HCT116 (cell line): ENCODE measurements at regions of chr3 and their contacts with region 1.

Region 1: DNA sequence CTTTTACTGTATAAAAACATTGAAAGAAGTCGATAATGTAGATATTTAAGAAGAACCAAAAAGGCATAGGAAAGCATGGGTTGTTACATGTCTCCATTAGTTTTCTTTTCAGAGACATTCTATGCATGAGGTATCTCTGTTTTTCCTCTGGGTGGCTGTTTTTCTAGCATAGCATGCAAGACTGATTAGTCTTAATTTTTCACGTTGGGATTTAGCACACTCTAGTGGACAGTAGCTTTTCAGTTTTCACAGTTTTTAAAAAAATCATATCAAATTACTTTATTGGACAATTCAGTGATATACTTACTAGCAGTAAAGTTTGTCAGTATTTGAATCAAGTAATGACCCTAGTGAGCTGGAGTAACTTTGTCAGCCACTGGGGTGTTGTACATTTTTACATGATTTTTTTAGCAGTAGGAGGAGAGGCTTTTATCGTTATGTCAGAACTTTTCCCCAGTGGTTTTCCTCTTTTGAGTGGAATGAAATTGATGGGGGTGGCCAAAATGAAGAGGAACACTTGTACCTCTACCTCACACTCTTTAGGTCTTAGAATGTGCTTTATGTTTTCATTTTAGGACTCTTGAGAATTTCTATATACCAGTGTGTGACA is 57.2 kb downstream of the SEC22A start:
- DNase-seq: peak; percentile 50
- ATAC-seq: peak; percentile 94
- H3K4me3 ChIP-seq: no peak overlapping the region
- H3K27ac ChIP-seq: no peak overlapping the region
- H3K4me1 ChIP-seq: no peaks in the 10 kb centered on the region
- H3K27me3 ChIP-seq: no peaks in the 10 kb centered on the region
- CTCF ChIP-seq: peak; percentile 59 to 96 (median 75)
- POLR2A ChIP-seq: no peak
- RAD21 ChIP-seq: peak; percentile 85

Region 2: DNA sequence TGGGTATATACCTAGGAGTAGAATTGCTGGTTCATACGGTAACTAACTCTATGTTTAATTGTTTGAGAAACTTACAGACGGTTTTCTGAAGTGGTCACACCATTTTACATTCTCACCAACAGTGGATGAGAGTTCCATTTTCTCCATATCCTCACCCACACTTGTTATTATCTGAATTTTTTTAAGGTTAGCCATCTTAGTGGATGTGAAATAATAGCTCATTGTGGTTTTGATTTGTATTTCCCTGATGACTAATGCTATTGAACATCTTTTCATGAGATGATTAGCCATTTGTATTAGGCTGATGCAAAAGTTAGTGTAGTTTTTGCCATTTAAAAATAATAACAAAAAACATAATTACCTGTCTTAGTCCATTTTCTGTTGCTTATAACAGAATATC is 915.3 kb before region 1 on chr3:
- CTCF ChIA-PET with region 1: no interaction called
- POLR2A ChIA-PET with region 1: no interaction called
- RAD21 ChIA-PET with region 1: no interaction called
- intact Hi-C with region 1: no loop called
- DNase-seq: no peak
- ATAC-seq: no peak
- H3K4me3 ChIP-seq: no peak overlapping the region
- H3K27ac ChIP-seq: no peak overlapping the region
- H3K4me1 ChIP-seq: no peaks in the 10 kb centered on the region
- H3K27me3 ChIP-seq: no peaks in the 10 kb centered on the region
- CTCF ChIP-seq: no peak
- POLR2A ChIP-seq: no peak
- RAD21 ChIP-seq: no peak

Region 3: GRCh38 chr3:122392868-122393844 is 865.8 kb before region 1 on chr3:
- CTCF ChIA-PET with region 1: interaction called, 4 read pairs
- POLR2A ChIA-PET with region 1: no interaction called
- RAD21 ChIA-PET with region 1: no interaction called
- intact Hi-C with region 1: loop called (anchors 5 kb)
- DNase-seq: no peak
- ATAC-seq: no peak
- H3K4me3 ChIP-seq: no peak overlapping the region
- H3K27ac ChIP-seq: no peak overlapping the region
- H3K4me1 ChIP-seq: peaks cover 0 to 4% of the 10 kb centered on the region in 2 experiments; a peak in 1 of 4 replicates
- H3K27me3 ChIP-seq: no peaks in the 10 kb centered on the region
- CTCF ChIP-seq: peak; percentile 60 to 74 (median 61); a peak in 5 of 6 replicates
- POLR2A ChIP-seq: no peak
- RAD21 ChIP-seq: peak; percentile 72

Region 4: DNA sequence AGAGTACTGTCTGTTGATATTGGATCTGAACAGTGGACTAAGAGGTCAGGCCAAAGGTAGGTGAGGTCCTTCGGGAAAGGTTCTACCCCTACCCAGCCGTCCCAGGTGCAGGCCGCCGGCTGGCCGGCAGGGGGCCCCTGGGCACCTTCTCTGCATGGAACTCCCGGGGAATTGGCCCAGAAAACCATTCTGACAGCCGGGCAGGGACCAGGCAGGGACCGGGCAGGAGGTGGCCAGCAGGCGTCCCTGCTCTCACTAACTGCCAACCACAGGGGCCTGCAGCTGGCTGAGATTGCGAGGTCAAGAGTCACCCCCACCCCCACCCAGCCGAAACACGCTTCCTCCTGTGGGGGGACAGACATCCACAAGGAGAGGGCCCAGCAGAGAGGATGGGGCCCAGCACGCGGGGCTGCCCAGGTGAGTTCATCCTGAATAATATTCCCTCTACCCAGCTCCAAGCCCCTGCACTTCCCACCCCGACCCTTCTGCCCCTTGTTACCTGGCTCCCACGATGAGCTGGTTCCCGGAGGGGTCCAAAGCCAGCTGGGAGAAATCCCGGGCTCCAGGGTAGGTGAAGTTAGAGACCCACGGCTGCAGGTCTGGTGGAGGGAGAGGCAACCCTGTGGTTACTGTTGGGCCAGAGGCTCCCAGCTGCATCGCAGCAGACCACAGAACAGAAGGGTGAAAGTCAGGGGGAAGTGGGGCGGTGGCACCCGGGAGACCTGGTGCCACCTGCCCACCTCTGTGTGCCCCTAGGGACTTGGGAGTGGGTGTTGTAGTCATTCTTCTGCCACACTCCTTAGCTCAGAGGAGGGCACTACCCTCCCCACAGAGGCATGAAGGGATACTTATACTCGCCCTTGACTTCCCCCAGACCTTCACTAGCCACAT is 315.7 kb before region 1 on chr3:
- CTCF ChIA-PET with region 1: interaction called, 4 read pairs
- POLR2A ChIA-PET with region 1: no interaction called
- RAD21 ChIA-PET with region 1: interaction called in 1 of 2 experiments, 3 read pairs
- intact Hi-C with region 1: loop called (anchors 1 kb)
- DNase-seq: peak; percentile 41
- ATAC-seq: peak; percentile 99
- H3K4me3 ChIP-seq: no peak overlapping the region
- H3K27ac ChIP-seq: no peak overlapping the region
- H3K4me1 ChIP-seq: no peaks in the 10 kb centered on the region
- H3K27me3 ChIP-seq: no peaks in the 10 kb centered on the region
- CTCF ChIP-seq: peak; percentile 94 to 99 (median 96)
- POLR2A ChIP-seq: no peak
- RAD21 ChIP-seq: peak; percentile 93

Region 5: DNA sequence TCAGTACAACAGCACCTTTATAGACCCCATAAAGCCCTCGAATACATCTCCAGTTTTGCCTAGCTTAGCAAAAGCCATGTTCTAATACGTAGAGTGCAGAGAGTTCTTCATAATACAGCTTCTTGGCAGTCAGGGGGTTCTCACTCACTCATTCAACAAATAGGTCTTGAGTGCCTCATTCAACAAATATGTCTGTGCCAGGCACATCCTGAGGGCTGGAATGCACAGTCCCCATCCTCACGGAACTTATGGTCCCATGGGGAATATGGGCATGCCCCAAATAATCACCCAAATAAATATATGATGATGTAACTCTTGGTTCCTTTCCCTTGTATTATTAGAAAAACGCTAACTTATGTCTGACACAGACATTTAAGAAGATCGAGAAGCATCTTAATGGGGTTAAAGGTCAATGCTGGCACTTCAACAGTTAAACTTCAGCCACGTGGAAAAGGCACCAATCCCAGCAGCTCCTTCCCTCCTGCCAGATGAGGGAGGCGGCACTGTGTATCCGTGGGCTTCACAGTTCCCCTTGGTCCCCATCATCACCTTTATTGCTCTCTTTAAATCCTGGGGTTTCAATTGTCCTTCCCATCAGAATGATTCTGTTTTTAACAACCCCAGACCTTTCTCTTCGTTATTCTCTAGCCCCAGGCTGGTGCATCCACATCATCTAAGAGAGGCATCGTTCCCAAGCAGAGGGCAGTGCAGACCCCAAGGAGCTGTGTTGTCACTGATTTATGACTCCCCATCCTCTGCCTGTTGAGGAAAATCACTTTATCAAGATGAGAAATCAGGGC is 212.5 kb before region 1 on chr3:
- CTCF ChIA-PET with region 1: no interaction called
- POLR2A ChIA-PET with region 1: no interaction called
- RAD21 ChIA-PET with region 1: no interaction called
- intact Hi-C with region 1: loop called (anchors 5 kb)
- DNase-seq: no peak
- ATAC-seq: no peak
- H3K4me3 ChIP-seq: no peak overlapping the region
- H3K27ac ChIP-seq: no peak overlapping the region
- H3K4me1 ChIP-seq: no peaks in the 10 kb centered on the region
- H3K27me3 ChIP-seq: no peaks in the 10 kb centered on the region
- CTCF ChIP-seq: no peak
- POLR2A ChIP-seq: no peak
- RAD21 ChIP-seq: no peak